Activated T-helper 2 cell treated with anti-CD3 and anti-CD28 coated beads, Interferon-gamma antibody, Interleukin-2, Interleukin-4, amounts not matched to agents 10 μg/mL and 5 μg/mL and 100 μg/mL, durations not matched to agents 14 hours and 24 hours and 36 hours (primary cell): ENCODE measurements at regions of chr1 and their contacts with region 1.

Region 1: GRCh38 chr1:222570837-222571236 is 18.9 kb downstream of the TAF1A start:
- DNase-seq: no peak
- H3K4me3 Mint-ChIP-seq: no peak overlapping the region
- H3K27ac Mint-ChIP-seq: no peak overlapping the region
- H3K4me1 Mint-ChIP-seq: peaks cover 4% of the 10 kb centered on the region
- H3K27me3 Mint-ChIP-seq: no peaks in the 10 kb centered on the region

Region 2: DNA sequence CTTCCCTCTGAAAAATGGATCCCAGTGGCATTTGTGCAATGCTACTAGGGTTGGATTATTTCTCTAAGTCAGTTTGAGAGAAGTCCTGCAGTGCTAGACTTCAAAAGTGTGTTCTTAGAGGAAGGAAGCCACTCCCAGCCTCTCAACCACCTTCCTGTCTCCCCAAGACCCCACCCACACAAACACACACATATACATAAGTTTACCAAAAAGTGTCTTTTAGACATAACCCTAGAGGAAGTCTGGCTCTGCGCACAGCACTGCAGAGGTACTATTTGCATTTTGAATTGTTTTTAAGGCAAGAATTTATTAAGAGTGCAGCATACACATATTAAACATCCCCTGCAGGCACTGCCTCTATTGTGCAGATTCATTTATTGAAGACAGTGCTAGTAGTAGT is 150.2 kb before region 1 on chr1:
- intact Hi-C with region 1: no loop called
- DNase-seq: no peak
- H3K4me3 Mint-ChIP-seq: no peak overlapping the region
- H3K27ac Mint-ChIP-seq: no peak overlapping the region
- H3K4me1 Mint-ChIP-seq: peaks cover 25% of the 10 kb centered on the region
- H3K27me3 Mint-ChIP-seq: peaks cover 5% of the 10 kb centered on the region

Region 3: DNA sequence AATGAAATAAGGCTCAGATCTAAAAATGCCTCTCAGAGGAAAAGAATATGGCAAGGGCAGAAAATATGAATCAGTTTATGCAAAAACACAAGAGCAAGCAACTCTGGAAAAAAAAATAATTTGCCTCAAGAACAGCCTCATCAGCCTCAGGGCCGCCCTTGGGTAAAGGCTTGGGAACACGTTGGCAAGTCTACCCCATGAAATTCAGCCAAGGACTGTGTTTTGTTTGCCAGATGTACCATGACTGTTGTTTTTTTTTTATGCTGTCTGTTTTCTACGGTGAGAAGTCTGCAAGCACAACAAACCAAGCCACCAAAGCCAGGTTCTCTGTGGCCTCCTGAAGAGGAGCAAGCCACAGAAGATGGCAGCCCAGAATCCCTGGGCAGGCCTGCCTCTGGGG is 40.9 kb before region 1 on chr1:
- intact Hi-C with region 1: loop called (anchors 1 kb)
- DNase-seq: no peak
- H3K4me3 Mint-ChIP-seq: no peak overlapping the region
- H3K27ac Mint-ChIP-seq: no peak overlapping the region
- H3K4me1 Mint-ChIP-seq: no peaks in the 10 kb centered on the region
- H3K27me3 Mint-ChIP-seq: peaks cover 15% of the 10 kb centered on the region

Region 4: DNA sequence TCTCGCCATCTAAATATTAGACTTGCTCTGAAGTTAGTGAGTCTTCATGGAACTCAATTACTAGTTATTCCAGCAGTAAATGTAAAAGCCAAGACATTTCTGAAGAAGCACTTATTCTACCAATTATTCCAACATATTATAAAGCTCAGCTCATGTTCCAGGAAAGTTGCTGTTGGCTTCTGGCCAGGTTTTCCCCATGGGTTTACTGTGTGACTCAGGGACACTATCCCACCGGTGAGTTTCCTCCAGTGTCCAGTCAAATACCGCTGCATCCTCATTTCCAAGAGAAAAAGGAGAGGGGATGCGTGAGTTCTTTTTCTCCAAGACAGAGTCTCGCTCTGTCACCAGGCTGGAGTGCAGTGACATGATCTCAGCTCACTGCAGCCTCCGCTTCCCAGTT is 13.7 kb before region 1 on chr1:
- intact Hi-C with region 1: no loop called
- DNase-seq: no peak
- H3K4me3 Mint-ChIP-seq: no peak overlapping the region
- H3K27ac Mint-ChIP-seq: no peak overlapping the region
- H3K4me1 Mint-ChIP-seq: peaks cover 2% of the 10 kb centered on the region
- H3K27me3 Mint-ChIP-seq: no peaks in the 10 kb centered on the region